ENCODE measurements at regions of chr17 and their contacts with region 1.

Region 1: DNA sequence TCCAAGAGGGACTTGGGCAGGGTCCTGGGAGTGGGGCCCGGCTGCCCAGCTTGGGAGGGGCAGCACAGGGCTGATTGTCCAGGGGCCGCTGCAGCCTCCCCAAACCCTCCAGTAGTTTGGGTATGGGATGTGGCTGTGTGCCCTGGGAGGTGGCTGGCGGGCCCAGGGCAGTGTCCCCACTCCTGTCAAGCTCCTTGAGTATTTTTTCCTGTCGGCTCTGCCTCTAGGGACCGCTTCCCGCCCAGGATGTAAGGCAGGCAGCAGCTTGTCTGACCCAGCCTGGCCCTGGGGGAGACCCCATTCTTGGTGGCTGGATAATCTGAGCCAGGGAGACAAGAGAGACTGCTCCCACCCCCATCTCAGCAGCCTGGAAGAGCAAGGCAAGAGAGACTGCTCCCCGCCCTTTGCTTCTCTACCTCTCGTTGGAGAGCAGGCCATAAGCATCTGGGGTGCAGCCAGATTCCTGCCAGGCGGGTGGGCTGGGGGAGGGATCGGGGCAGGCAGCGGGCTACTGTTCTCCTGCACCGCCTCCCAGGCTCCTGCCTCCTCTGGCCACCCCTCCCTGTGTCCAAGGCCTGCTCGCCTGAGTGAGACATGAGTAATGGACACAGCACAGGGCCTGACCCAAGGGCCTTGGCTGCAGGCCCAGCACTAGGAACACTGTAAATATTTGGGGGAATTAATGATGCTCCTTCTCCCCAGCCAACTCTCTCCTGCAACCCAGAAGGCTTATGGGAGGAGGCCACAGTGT is 18.4 kb upstream of the ITGA3 start:
- DNase-seq: peak; percentile 85

Region 2: GRCh38 chr17:48236681-48237134 is 1800.8 kb before region 1 on chr17:
- intact Hi-C with region 1: no loop called
- DNase-seq: no peak

Region 3: GRCh38 chr17:50304781-50305404 is 267.4 kb after region 1 on chr17:
- intact Hi-C with region 1: loop called in 1 of 2 experiments (anchors 5 kb)
- DNase-seq: no peak